Gastrocnemius medialis (tissue), 4 donors: ENCODE measurements at regions of chr16 and their contacts with region 1.

Region 1: DNA sequence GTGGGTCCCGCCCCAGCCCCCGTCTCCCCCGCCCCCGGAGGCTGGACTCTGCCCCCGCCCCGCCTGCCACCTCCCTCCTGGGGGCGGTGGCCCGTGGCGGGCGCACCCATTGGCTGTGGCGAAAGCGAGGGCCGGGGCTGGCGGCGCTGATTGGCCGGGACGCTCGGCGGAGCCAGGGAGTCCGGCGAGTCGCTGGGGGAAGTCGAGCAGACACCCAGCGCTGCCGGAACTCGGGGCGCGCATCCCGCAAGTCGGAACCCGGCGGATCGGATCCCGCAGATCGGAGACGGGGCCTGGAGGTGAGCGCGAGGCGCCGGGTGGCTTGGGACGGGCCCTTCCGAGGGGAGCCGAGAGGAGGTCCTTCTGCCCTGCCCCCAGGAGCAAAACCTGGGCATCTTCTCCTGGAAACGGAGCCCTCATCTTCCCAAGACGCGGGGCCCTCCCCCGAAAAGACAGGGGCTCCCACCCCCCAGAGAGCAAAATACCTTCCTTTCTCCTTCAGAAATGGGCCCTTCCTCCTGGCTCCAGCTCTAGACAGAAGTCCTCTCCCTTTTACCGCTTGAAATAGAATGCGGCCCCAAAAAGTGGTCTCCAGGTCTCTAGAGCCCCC is at the start of gene ABAT:
- DNase-seq: peak; percentile 79 to 80
- ATAC-seq: peak; percentile 93 to 95
- H3K4me3 ChIP-seq: peak within 1 kb of the TSS; percentile 51 to 74 (median 69)
- H3K27ac ChIP-seq: peak within 1 kb of the TSS in 3 of 4 donors; percentile 20 to 51 (median 24)
- H3K4me1 ChIP-seq: peaks cover 6 to 9% of the 10 kb centered on the region in 2 donors
- H3K27me3 ChIP-seq: no peaks in the 10 kb centered on the region
- CTCF ChIP-seq: no peak
- POLR2A ChIP-seq: peak; percentile 23 to 30
- total RNA-seq, gene ABAT: 0.55 to 1.9 (median 0.92) TPM

Region 2: GRCh38 chr16:8621572-8622314 is 52.8 kb before region 1 on chr16 and contains the start of gene METTL22:
- in situ Hi-C with region 1: no loop called
- intact Hi-C with region 1: loop called (anchors 2 kb)
- DNase-seq: peak; percentile 74 to 88
- ATAC-seq: peak; percentile 89 to 93
- H3K4me3 ChIP-seq: peak within 1 kb of the TSS; percentile 90 to 96 (median 94)
- H3K27ac ChIP-seq: peak within 1 kb of the TSS; percentile 91 to 96 (median 94)
- H3K4me1 ChIP-seq: peaks cover 18 to 27% of the 10 kb centered on the region in 2 donors
- H3K27me3 ChIP-seq: peaks cover 0 to 3% (median 0%) of the 10 kb centered on the region in 3 donors
- CTCF ChIP-seq: no peak
- POLR2A ChIP-seq: peak; percentile 69 to 80
- total RNA-seq, gene METTL22: 28.8 to 71.5 (median 51.5) TPM

Region 3: DNA sequence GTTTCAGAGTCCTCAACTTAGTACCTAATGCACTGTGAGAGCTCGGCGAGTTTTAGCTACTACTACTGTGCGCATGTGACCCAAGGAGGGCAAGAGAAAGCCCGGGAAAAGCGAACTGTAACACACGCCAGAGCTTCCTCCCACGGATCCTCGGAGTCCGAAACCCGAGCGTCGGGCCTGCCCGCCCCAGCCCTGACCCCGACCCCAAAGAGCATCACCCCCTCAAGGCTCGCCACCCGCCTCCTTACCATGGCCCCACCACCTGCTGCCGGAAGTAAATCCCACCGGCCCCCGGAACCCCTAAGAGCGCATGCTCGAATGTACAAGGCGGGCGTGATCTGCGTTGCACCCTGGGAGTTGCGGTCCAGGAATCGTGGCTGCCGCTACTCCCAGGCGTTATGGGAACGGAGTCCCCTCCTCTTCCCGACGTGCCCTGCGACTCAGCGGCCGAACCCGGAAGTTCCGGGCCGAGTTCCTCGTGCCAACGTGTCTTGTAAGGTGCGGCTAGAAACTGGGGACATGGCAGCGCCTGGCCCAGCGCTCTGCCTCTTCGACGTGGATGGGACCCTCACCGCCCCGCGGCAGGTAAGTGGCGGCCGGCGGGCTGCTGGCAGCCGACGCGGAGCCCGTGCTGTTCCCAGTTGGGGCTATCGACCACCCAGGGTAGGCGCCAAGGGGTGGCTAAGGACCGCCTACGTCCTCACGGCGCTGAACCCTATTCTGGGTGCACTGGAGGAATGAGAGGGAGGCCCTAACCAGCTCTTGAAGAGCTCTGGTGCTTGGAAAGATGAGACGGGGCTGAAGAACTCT is 123.1 kb after region 1 on chr16 and contains the starts of genes PMM2 and TMEM186:
- in situ Hi-C with region 1: loop called in 2 of 4 experiments (anchors 10 to 25 kb)
- intact Hi-C with region 1: no loop called
- DNase-seq: peak; percentile 95 to 96
- ATAC-seq: peak; percentile 98 to 99
- H3K4me3 ChIP-seq: peak within 1 kb of the TSS; percentile 92 to 100 (median 96)
- H3K27ac ChIP-seq: peak within 1 kb of the TSS; percentile 84 to 98 (median 92)
- H3K4me1 ChIP-seq: peaks cover 26% of the 10 kb centered on the region in 2 donors
- H3K27me3 ChIP-seq: no peaks in the 10 kb centered on the region
- CTCF ChIP-seq: peak in 3 of 5 experiments; percentile 15 to 26 (median 16)
- POLR2A ChIP-seq: peak; percentile 23 to 67
- total RNA-seq, gene PMM2: 10.4 to 20.9 (median 16.6) TPM
- total RNA-seq, gene TMEM186: 10.2 to 16.9 (median 11.9) TPM

Region 4: GRCh38 chr16:8818504-8819270 is 144.2 kb after region 1 on chr16:
- in situ Hi-C with region 1: loop called in 1 of 4 experiments (anchors 25 kb)
- intact Hi-C with region 1: no loop called
- DNase-seq: no peak
- ATAC-seq: no peak
- H3K4me3 ChIP-seq: no peak overlapping the region
- H3K27ac ChIP-seq: no peak overlapping the region
- H3K4me1 ChIP-seq: no peaks in the 10 kb centered on the region
- H3K27me3 ChIP-seq: no peaks in the 10 kb centered on the region
- CTCF ChIP-seq: no peak
- POLR2A ChIP-seq: no peak

Region 5: GRCh38 chr16:8885674-8886592 is 211.4 kb after region 1 on chr16:
- in situ Hi-C with region 1: loop called in 1 of 4 experiments (anchors 25 kb)
- intact Hi-C with region 1: no loop called
- DNase-seq: peak in 1 of 2 donors; percentile 78
- ATAC-seq: peak in 1 of 2 donors; percentile 40
- H3K4me3 ChIP-seq: no peak overlapping the region
- H3K27ac ChIP-seq: peak overlapping the region; percentile 8 to 81 (median 40)
- H3K4me1 ChIP-seq: peaks cover 11 to 36% of the 10 kb centered on the region in 2 donors
- H3K27me3 ChIP-seq: peaks cover 0 to 8% (median 7%) of the 10 kb centered on the region in 3 donors
- CTCF ChIP-seq: no peak
- POLR2A ChIP-seq: peak; percentile 44 to 47

Region 6: DNA sequence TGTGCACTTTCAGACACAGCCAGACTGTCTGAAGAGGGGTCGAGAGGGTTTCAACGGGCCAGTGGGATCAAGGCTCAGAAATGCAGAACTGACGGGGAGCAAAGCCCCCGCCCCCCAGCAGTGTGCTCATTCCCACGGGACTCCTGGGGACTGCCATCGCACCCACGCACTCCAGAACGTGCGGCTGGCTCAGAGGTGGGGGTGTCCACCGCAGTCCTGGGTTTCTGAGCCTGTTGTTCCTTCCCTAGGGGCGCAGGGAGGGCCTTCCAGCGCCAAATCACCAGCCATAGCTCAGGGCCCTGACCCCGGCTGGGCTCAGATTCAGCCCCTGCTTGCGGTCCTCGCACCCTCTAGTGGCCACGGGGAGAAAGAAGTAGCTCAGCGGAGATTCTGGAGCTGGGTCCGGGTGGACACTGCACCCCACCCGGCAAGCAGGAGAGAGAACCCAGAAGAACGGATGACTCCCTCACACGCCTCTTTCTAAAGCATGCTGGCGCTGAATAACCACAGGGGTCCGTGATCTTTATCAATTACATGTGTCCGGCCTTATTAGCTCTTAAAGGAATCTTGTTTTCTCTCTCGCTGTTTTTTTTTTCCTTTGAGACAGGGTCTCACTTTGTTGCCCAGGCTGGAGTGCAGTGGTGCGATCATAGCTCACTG is 334.2 kb after region 1 on chr16:
- in situ Hi-C with region 1: loop called in 1 of 4 experiments (anchors 25 kb)
- intact Hi-C with region 1: no loop called
- DNase-seq: peak; percentile 38 to 56
- ATAC-seq: peak; percentile 74 to 91
- H3K4me3 ChIP-seq: peak overlapping the region; percentile 33 to 63 (median 45)
- H3K27ac ChIP-seq: no peak overlapping the region
- H3K4me1 ChIP-seq: peaks cover 0 to 6% of the 10 kb centered on the region in 2 donors
- H3K27me3 ChIP-seq: no peaks in the 10 kb centered on the region
- CTCF ChIP-seq: peak; percentile 56 to 84 (median 78)
- POLR2A ChIP-seq: no peak